ENCODE measurements at regions of chr6 and their contacts with region 1.

Region 1: GRCh38 chr6:135909737-135910387 is 58.4 kb downstream of the PDE7B start:
- DNase-seq: peak; percentile 19
- ATAC-seq: peak; percentile 92
- H3K4me3 ChIP-seq: no peak overlapping the region
- H3K27ac ChIP-seq: no peak overlapping the region
- H3K4me1 ChIP-seq: no peaks in the 10 kb centered on the region
- H3K27me3 ChIP-seq: no peaks in the 10 kb centered on the region
- CTCF ChIP-seq: peak; percentile 68 to 73 (median 71); a peak in 5 of 6 replicates
- EP300 ChIP-seq: no peak
- POLR2A ChIP-seq: no peak
- RAD21 ChIP-seq: peak; percentile 88

Region 2: DNA sequence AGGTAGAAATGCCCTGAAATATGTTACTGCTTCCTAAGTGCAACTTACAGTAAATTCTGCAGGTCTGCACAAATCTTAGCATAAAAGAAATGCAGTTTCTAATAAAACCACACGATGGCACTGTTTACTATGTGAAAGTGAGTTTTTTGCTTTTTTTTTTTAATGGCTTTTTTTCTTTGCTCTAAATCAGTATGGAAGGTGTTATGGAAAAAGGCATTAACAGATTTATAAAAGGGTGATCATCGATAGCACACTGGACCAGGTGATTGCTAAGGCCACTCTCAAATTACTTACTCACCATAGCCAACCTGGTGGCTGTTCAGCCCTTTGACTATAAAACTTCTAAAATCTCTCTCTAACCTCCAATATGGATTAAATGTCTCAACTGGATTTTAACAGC is 458.2 kb before region 1 on chr6:
- CTCF ChIA-PET with region 1: interaction called, 14 read pairs
- POLR2A ChIA-PET with region 1: no interaction called
- RAD21 ChIA-PET with region 1: interaction called, 3 read pairs
- SMC1A ChIA-PET with region 1: interaction called, 11 read pairs
- in situ Hi-C with region 1: no loop called
- intact Hi-C with region 1: loop called (anchors 5 kb)
- DNase-seq: no peak
- ATAC-seq: peak; percentile 34; the same call in 2 of the 3 replicates
- H3K4me3 ChIP-seq: no peak overlapping the region
- H3K27ac ChIP-seq: no peak overlapping the region
- H3K4me1 ChIP-seq: no peaks in the 10 kb centered on the region; the same call in 1 of the 2 replicates
- H3K27me3 ChIP-seq: no peaks in the 10 kb centered on the region
- CTCF ChIP-seq: peak; percentile 49 to 67 (median 58)
- EP300 ChIP-seq: no peak
- POLR2A ChIP-seq: no peak
- RAD21 ChIP-seq: peak; percentile 77

Region 3: DNA sequence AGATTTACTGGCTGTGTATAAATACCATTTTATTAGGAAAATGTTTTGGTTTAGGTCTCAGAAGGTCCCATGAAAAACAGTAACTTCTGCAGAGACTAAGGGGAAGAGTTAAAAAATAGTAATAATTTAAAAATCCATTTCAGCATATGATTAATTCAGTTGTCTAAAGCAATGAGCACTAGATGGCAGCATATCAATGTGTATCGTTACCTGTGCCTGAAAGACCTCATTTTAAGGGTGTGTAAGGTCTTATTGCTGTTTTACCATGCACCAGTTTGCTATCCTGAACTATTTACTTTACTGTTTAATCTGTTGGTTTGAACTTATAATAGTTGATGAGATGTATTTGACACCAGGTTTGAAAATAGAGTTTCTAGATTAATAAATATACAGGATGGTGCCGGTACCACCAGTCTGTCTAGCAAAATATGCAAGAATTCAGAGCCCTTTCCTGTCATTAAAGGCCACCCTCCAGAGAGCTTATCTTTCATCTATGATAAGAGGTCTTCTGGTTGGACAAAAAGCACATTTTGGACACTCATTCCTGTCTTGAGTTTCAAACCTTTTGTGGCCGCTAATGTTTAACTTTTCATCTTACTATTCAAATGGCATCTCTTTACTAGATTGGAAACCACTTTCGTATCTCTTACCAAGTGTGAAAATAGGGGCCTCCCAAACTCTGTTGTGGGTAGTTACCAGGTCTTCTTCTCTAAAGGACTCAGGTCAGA is 403.4 kb before region 1 on chr6:
- CTCF ChIA-PET with region 1: interaction called, 8 read pairs
- POLR2A ChIA-PET with region 1: no interaction called
- RAD21 ChIA-PET with region 1: interaction called, 4 read pairs
- SMC1A ChIA-PET with region 1: no interaction called
- in situ Hi-C with region 1: no loop called
- intact Hi-C with region 1: loop called (anchors 1 kb)
- DNase-seq: no peak
- ATAC-seq: peak; percentile 96
- H3K4me3 ChIP-seq: no peak overlapping the region
- H3K27ac ChIP-seq: no peak overlapping the region
- H3K4me1 ChIP-seq: no peaks in the 10 kb centered on the region
- H3K27me3 ChIP-seq: no peaks in the 10 kb centered on the region
- CTCF ChIP-seq: peak; percentile 40 to 61 (median 50); a peak in 5 of 6 replicates
- EP300 ChIP-seq: no peak
- POLR2A ChIP-seq: no peak
- RAD21 ChIP-seq: peak; percentile 74

Region 4: DNA sequence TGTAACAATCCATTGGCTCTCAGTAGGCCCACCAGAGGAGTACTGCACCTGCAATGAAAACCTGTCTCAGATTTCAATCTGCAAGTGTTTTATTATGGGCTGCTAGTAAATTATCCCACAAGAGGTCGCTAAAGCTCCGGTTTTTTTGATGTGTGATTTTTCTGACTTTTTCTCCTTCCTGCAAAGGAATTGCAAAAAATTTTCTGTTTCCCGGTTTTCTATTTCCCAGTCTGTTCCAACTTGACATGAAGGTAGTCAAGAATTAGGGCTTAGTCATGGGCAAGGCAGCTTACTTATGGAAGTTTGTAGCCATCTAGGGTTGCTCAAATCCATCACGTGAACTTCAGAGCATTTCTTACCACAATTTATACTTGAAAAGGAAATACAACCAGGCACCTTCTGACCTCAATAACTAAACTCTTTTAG is 373.9 kb before region 1 on chr6:
- CTCF ChIA-PET with region 1: interaction called, 84 read pairs
- POLR2A ChIA-PET with region 1: no interaction called
- RAD21 ChIA-PET with region 1: interaction called, 18 read pairs
- SMC1A ChIA-PET with region 1: interaction called, 32 read pairs
- in situ Hi-C with region 1: loop called (anchors 5 kb)
- intact Hi-C with region 1: loop called (anchors 1 kb)
- DNase-seq: peak; percentile 4
- ATAC-seq: peak; percentile 60
- H3K4me3 ChIP-seq: no peak overlapping the region
- H3K27ac ChIP-seq: no peak overlapping the region
- H3K4me1 ChIP-seq: no peaks in the 10 kb centered on the region
- H3K27me3 ChIP-seq: no peaks in the 10 kb centered on the region; a peak in 1 of 4 replicates
- CTCF ChIP-seq: peak; percentile 51 to 69 (median 58); a peak in 5 of 6 replicates
- EP300 ChIP-seq: no peak
- POLR2A ChIP-seq: no peak
- RAD21 ChIP-seq: peak; percentile 87

Region 5: DNA sequence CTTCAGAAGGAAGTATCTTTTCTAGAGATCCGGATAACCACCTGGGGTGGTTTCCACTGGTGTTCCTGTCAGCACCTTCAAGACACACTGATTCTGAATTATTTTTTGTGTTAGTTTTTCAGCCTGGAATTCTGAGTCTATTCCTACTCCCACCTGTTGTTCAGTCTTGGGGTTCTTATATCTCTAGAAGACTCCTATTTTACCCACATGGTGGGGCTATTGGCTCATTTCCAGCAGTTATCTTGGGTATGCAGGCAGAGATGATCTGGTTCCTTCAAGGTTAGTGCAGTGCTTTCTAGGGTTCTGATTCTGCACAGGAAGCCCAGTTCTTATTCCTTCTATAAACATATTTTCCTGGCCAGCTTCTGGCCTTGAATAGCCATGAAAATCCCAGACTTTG is 234.0 kb before region 1 on chr6:
- CTCF ChIA-PET with region 1: interaction called, 6 read pairs
- POLR2A ChIA-PET with region 1: no interaction called
- RAD21 ChIA-PET with region 1: interaction called, 4 read pairs
- SMC1A ChIA-PET with region 1: interaction called, 6 read pairs
- in situ Hi-C with region 1: loop called (anchors 5 kb)
- intact Hi-C with region 1: loop called (anchors 1 kb)
- DNase-seq: peak; percentile 4
- ATAC-seq: peak; percentile 64; the same call in 2 of the 3 replicates
- H3K4me3 ChIP-seq: no peak overlapping the region
- H3K27ac ChIP-seq: no peak overlapping the region
- H3K4me1 ChIP-seq: no peaks in the 10 kb centered on the region
- H3K27me3 ChIP-seq: peaks cover 0 to 3% of the 10 kb centered on the region in 2 experiments; a peak in 1 of 4 replicates
- CTCF ChIP-seq: peak in 2 of 3 experiments; percentile 35 to 48; a peak in 4 of 6 replicates
- EP300 ChIP-seq: no peak
- POLR2A ChIP-seq: no peak
- RAD21 ChIP-seq: peak; percentile 89

Region 6: GRCh38 chr6:135891710-135892109 is 18.2 kb before region 1 on chr6:
- CTCF ChIA-PET with region 1: interaction called, 10 read pairs
- POLR2A ChIA-PET with region 1: no interaction called
- RAD21 ChIA-PET with region 1: no interaction called
- SMC1A ChIA-PET with region 1: interaction called, 3 read pairs
- in situ Hi-C with region 1: no loop called
- intact Hi-C with region 1: no loop called
- DNase-seq: no peak
- ATAC-seq: no peak
- H3K4me3 ChIP-seq: no peak overlapping the region
- H3K27ac ChIP-seq: no peak overlapping the region
- H3K4me1 ChIP-seq: no peaks in the 10 kb centered on the region
- H3K27me3 ChIP-seq: no peaks in the 10 kb centered on the region
- CTCF ChIP-seq: no peak
- EP300 ChIP-seq: no peak
- POLR2A ChIP-seq: no peak
- RAD21 ChIP-seq: no peak

Region 7: DNA sequence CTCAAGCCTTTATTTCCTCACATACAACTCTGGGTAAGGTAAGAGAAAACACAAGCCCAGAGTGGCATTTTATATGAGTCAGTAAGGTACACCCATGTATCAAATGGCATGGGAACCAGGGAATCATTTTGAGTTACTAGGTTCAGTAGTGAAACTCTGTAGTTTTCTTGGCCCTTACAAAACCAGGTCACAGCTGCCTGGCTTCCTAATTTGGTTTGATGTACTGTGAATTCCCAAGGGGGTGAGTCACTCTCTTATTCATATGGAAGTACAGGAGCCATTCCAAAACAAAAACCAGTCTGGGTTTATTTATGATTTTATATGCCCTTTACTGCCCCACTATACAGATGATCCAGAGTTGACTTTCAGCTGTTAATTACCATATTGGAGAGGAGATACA is 12.3 kb after region 1 on chr6:
- CTCF ChIA-PET with region 1: interaction called, 13 read pairs
- POLR2A ChIA-PET with region 1: no interaction called
- RAD21 ChIA-PET with region 1: no interaction called
- SMC1A ChIA-PET with region 1: interaction called, 10 read pairs
- in situ Hi-C with region 1: no loop called
- intact Hi-C with region 1: no loop called
- DNase-seq: no peak
- ATAC-seq: peak; percentile 34; the same call in 2 of the 3 replicates
- H3K4me3 ChIP-seq: no peak overlapping the region
- H3K27ac ChIP-seq: no peak overlapping the region
- H3K4me1 ChIP-seq: no peaks in the 10 kb centered on the region
- H3K27me3 ChIP-seq: no peaks in the 10 kb centered on the region; a peak in 1 of 4 replicates
- CTCF ChIP-seq: no peak
- EP300 ChIP-seq: no peak
- POLR2A ChIP-seq: no peak
- RAD21 ChIP-seq: no peak